ENCODE measurements at regions of chr7 and their contacts with region 1.

Region 1: GRCh38 chr7:2241580-2242540 is at the starts of genes MRM2 and NUDT1:
- DNase-seq: peak; percentile 16 to 92
- H3K4me3 ChIP-seq: peak within 1 kb of the TSS; percentile 74 to 91
- H3K27ac ChIP-seq: peak within 1 kb of the TSS; percentile 27 to 52
- H3K4me1 ChIP-seq: peaks cover 3 to 16% of the 10 kb centered on the region in 2 donors
- H3K27me3 ChIP-seq: no peaks in the 10 kb centered on the region
- CTCF ChIP-seq: no peak
- total RNA-seq, gene MRM2: 6.7 TPM
- total RNA-seq, gene NUDT1: 9.0 TPM

Region 2: DNA sequence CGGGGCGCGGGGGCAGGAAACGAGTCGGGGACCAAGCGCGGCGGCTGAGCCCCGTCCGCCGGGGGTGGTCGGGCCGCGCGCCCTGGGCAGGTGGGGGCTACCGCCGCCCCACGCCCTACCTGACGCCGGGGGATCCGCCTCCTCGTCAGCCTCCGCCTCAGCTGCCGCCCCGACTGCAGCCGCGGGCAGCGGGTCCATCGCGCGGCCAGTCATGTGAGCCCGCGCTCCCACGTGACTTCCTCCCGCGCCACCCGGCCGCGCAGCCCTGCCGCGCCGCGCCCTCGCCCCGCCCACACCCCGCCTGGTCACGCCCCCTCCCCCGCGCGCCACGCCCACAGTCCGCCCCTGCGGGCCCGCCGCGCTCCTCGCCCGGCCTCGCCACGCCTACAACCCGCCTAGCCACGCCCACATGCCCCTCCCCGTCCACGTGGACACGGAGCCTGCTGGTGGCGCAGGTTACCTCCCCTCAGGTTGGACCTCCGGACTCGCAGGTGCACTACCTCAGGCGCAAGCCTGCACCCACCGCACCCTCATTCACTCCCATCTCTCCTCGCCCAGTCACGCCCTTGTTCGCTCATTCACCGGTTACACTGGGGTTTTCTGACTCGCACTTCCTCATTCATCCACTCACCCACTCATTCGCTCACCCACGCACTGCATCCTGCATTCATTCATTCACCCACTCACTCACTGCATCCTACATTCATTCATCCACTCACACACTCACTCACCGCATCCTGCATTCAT is 72.5 kb after region 1 on chr7 and contains the start of gene SNX8:
- intact Hi-C with region 1: loop called (anchors 5 kb)
- DNase-seq: peak; percentile 51 to 88
- H3K4me3 ChIP-seq: peak within 1 kb of the TSS; percentile 77 to 93
- H3K27ac ChIP-seq: peak within 1 kb of the TSS; percentile 65 to 69
- H3K4me1 ChIP-seq: peaks cover 0 to 7% of the 10 kb centered on the region in 2 donors
- H3K27me3 ChIP-seq: no peaks in the 10 kb centered on the region
- CTCF ChIP-seq: no peak
- total RNA-seq, gene SNX8: 12.2 TPM

Region 3: GRCh38 chr7:2403014-2403717 is 161.3 kb after region 1 on chr7 and contains the start of gene CHST12:
- intact Hi-C with region 1: loop called (anchors 2 kb)
- DNase-seq: peak; percentile 73 to 96
- H3K4me3 ChIP-seq: peak within 1 kb of the TSS; percentile 99
- H3K27ac ChIP-seq: peak within 1 kb of the TSS; percentile 66 to 78
- H3K4me1 ChIP-seq: peaks cover 14 to 29% of the 10 kb centered on the region in 2 donors
- H3K27me3 ChIP-seq: no peaks in the 10 kb centered on the region
- CTCF ChIP-seq: no peak
- total RNA-seq, gene CHST12: 79.4 TPM

Measured in ascending aorta (tissue), 2 donors.